H1 (cell line): ENCODE measurements at regions of chr7 and their contacts with region 1.

Region 1: GRCh38 chr7:8190119-8190895 is 71.7 kb downstream of the ICA1 start:
- DNase-seq: no peak
- H3K4me3 ChIP-seq: no peak overlapping the region
- H3K27ac ChIP-seq: no peak overlapping the region
- H3K4me1 ChIP-seq: peaks cover 0 to 14% (median 2%) of the 10 kb centered on the region in 4 experiments; a peak in 4 of 7 replicates
- H3K27me3 ChIP-seq: no peaks in the 10 kb centered on the region
- CTCF ChIP-seq: peak in 2 of 3 experiments; percentile 45 to 59; a peak in 3 of 4 replicates
- EP300 ChIP-seq: no peak
- POLR2A ChIP-seq: no peak
- RAD21 ChIP-seq: peak; percentile 75 to 79

Region 2: DNA sequence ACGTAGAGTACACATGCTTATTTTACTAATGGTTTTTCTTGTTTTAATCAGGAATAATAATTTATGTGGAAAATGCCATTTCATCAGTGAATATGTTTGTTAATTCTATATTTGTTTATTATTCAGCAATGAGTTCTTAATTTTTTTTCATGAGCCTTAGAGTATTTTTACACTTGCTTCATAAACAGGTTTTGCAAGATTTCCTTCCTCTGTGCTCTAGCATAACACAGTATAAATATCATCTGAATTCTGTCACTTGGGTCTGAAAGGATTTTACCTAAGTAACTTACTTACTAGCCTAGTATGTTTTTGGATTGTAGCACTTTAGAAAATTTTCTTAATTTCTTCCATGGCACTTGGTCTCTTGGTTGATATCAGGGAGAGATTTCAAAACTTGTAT is 175.9 kb before region 1 on chr7:
- CTCF ChIA-PET with region 1: no interaction called
- POLR2A ChIA-PET with region 1: no interaction called
- DNase-seq: no peak
- H3K4me3 ChIP-seq: no peak overlapping the region
- H3K27ac ChIP-seq: no peak overlapping the region
- H3K4me1 ChIP-seq: no peaks in the 10 kb centered on the region
- H3K27me3 ChIP-seq: no peaks in the 10 kb centered on the region
- CTCF ChIP-seq: no peak
- EP300 ChIP-seq: no peak
- POLR2A ChIP-seq: no peak
- RAD21 ChIP-seq: no peak

Region 3: GRCh38 chr7:8176370-8177081 is 13.8 kb before region 1 on chr7:
- CTCF ChIA-PET with region 1: interaction called, 10 read pairs
- POLR2A ChIA-PET with region 1: interaction called, 3 read pairs
- DNase-seq: no peak
- H3K4me3 ChIP-seq: no peak overlapping the region
- H3K27ac ChIP-seq: no peak overlapping the region
- H3K4me1 ChIP-seq: peaks cover 0 to 12% (median 2%) of the 10 kb centered on the region in 4 experiments; a peak in 4 of 7 replicates
- H3K27me3 ChIP-seq: no peaks in the 10 kb centered on the region
- CTCF ChIP-seq: no peak
- EP300 ChIP-seq: no peak
- POLR2A ChIP-seq: no peak
- RAD21 ChIP-seq: no peak

Region 4: DNA sequence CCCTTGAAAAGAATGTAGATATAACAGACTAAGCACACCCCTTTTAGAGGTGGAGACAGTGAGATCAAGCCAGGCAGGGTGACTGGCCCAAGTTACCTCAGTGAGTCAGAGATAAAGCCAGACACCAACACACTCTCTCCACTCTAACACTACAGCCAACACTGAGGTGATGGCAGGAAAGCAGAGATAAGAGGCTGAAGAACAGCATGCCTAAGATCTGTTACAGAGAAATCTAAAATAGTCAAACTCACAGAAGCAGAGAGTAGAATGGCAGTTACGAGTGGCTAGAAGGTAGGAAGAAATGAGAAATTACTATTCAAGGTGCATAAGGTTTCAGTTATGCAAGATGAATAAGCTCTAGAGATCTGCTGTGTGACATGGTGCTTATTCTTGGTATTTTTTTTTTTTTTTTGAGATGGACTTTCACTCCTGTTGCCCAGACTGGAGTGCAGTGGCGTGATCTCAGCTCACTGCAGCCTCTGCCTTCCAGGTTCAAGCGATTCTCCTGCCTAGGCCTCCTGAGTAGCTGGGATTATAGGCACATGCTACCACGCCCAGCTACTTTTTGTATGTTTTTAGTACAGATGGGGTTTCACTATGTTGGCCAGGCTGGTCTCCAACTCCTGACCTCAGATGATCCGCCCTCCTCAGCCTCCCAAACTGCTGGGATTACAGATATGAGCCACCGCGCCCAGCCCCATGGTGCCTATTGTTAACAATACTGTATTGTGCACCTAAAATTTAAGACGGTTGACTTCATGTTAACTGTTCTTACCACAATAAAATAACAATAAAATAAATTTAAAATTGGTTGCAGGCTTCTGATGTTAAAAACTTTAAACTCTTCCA is 42.9 kb after region 1 on chr7:
- CTCF ChIA-PET with region 1: no interaction called
- POLR2A ChIA-PET with region 1: no interaction called
- DNase-seq: no peak
- H3K4me3 ChIP-seq: no peak overlapping the region
- H3K27ac ChIP-seq: no peak overlapping the region
- H3K4me1 ChIP-seq: no peaks in the 10 kb centered on the region
- H3K27me3 ChIP-seq: no peaks in the 10 kb centered on the region
- CTCF ChIP-seq: no peak
- EP300 ChIP-seq: no peak
- POLR2A ChIP-seq: no peak
- RAD21 ChIP-seq: no peak